ENCODE measurements at regions of chr2 and their contacts with region 1.

Region 1: DNA sequence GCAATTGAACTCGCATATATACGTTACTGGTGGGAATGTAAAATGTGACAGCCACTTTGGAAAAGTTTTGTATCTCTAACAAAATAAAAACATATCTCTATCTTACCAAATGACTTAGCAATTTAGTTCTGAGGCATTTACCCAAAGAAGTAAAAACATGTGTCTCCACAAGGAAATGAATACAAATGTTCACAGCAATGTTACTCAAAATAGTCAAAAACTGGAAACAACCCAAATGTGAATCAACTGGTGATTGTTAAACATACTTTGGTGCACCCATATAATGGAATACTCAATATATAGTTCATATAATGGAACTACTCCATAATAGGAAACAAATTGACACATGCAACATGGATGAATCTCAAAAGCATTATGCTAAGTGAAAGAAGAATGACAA is 70.4 kb upstream of the DNER start:
- DNase-seq: no peak
- ATAC-seq: no peak
- H3K4me3 ChIP-seq: no peak overlapping the region
- H3K27ac ChIP-seq: no peak overlapping the region
- H3K4me1 ChIP-seq: peaks cover 4% of the 10 kb centered on the region; the same call in 1 of the 2 replicates
- H3K27me3 ChIP-seq: no peaks in the 10 kb centered on the region
- CTCF ChIP-seq: no peak

Region 2: GRCh38 chr2:230847883-230848388 is 1063.1 kb after region 1 on chr2:
- CTCF ChIA-PET with region 1: interaction called, 10 read pairs
- POLR2A ChIA-PET with region 1: no interaction called
- in situ Hi-C with region 1: no loop called
- intact Hi-C with region 1: no loop called
- DNase-seq: no peak
- ATAC-seq: peak; percentile 98
- H3K4me3 ChIP-seq: peak overlapping the region; percentile 23 to 42
- H3K27ac ChIP-seq: no peak overlapping the region
- H3K4me1 ChIP-seq: no peaks in the 10 kb centered on the region; the same call in 1 of the 2 replicates
- H3K27me3 ChIP-seq: peaks cover 7% of the 10 kb centered on the region; the same call in 1 of the 2 replicates
- CTCF ChIP-seq: peak; percentile 98